Activated CD4-positive, alpha-beta memory T cell treated with anti-CD3 and anti-CD28 coated beads for 36 hours (primary cell): ENCODE measurements at regions of chr3 and their contacts with region 1.

Region 1: DNA sequence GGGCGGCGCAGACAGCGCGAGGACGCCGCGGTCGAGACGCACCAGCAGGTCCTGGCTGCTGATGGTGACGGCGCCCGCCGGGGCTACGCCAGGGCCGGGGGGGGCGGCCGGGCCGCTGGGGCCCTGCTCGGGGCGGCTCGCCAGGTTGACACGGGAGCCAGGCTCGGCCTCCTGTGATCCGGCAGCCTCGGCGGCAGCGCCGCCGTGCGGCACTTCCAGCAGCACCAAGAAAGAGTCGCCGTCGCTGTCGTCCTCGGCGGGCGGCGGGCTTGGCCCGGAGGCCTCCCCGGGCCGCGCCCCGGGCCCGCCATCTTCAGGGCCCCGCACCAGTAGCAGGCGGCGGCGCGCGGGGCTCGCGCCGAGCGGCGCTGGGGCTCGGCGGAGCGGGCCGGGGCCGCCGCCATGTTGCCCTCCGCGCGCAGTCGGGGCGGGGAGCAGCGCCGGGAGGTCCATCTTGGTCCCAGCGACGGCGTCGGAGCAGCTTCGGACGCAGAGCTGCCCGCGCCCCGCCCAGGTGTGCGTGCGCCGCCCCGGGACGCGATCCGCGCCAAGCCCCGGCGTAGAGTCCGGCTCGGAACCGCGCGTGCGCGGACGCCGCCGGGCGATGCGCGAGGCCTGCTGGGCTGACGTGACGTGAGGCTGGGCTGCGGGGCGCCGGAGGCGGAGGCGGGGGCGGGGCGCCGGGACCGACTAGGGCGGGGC is at the start of gene ZXDC:
- DNase-seq: peak; percentile 94
- H3K4me3 Mint-ChIP-seq: peak within 1 kb of the TSS; percentile 88
- H3K27ac Mint-ChIP-seq: peak within 1 kb of the TSS; percentile 79
- H3K4me1 Mint-ChIP-seq: peaks cover 39% of the 10 kb centered on the region
- H3K27me3 Mint-ChIP-seq: no peaks in the 10 kb centered on the region
- total RNA-seq, gene ZXDC: 18.2 to 19.1 TPM

Region 2: DNA sequence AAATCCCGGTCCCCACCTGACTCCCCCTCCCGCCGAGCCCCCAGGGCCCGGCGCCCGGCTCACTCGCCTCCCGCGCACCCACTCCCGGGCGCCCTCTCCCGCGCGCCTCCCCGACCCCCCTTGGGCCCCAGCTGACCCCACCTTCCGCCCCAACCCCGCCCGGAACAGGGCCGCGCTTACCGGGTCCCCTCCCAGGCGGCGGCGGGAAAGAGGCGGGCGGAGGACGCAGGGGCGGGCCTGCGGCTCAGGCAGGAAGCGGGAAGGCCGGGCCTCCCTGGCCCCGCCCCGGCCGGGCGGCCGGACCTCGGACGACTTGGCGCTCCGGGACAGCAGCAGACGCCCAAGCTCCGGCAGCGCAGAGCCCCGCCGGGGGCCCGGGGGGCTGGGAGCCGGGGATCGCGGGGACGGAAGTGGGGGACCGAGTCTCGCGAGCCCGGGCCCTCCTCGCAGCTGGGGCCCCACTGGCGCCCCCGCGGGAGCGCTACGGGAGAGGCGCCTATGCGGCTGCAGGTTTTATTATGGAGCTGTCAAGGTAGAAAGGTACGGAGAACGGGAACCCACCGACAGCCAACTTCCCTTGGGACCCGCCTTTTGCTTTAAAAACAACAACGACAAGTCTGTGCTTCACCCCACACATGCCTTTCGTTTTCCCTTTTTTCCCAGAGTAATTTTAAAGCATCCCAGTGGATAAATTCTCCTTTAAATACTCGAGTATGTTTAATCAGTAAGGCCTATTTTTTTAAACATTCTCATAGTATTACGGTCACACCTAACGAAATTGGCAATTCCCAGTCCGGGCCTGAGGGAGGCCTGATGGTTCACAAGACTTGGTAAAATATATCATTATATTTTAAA is 391.4 kb before region 1 on chr3 and contains the start of gene SLC41A3:
- CTCF ChIA-PET with region 1: no interaction called
- POLR2A ChIA-PET with region 1: no interaction called
- intact Hi-C with region 1: loop called (anchors 2 kb)
- DNase-seq: peak; percentile 90
- H3K4me3 Mint-ChIP-seq: peak within 1 kb of the TSS; percentile 85
- H3K27ac Mint-ChIP-seq: peak within 1 kb of the TSS; percentile 67
- H3K4me1 Mint-ChIP-seq: peaks cover 19% of the 10 kb centered on the region
- H3K27me3 Mint-ChIP-seq: no peaks in the 10 kb centered on the region
- total RNA-seq, gene SLC41A3: 26.3 to 27.3 TPM

Region 3: GRCh38 chr3:126357295-126358037 is 118.1 kb before region 1 on chr3 and contains the start of gene KLF15:
- CTCF ChIA-PET with region 1: interaction called, 3 read pairs
- POLR2A ChIA-PET with region 1: no interaction called
- intact Hi-C with region 1: loop called (anchors 1 kb)
- DNase-seq: peak; percentile 87
- H3K4me3 Mint-ChIP-seq: peak within 1 kb of the TSS; percentile 77
- H3K27ac Mint-ChIP-seq: no peak within 1 kb of the TSS
- H3K4me1 Mint-ChIP-seq: peaks cover 14% of the 10 kb centered on the region
- H3K27me3 Mint-ChIP-seq: peaks cover 48% of the 10 kb centered on the region
- total RNA-seq, gene KLF15: 0.40 to 0.46 TPM

Region 4: DNA sequence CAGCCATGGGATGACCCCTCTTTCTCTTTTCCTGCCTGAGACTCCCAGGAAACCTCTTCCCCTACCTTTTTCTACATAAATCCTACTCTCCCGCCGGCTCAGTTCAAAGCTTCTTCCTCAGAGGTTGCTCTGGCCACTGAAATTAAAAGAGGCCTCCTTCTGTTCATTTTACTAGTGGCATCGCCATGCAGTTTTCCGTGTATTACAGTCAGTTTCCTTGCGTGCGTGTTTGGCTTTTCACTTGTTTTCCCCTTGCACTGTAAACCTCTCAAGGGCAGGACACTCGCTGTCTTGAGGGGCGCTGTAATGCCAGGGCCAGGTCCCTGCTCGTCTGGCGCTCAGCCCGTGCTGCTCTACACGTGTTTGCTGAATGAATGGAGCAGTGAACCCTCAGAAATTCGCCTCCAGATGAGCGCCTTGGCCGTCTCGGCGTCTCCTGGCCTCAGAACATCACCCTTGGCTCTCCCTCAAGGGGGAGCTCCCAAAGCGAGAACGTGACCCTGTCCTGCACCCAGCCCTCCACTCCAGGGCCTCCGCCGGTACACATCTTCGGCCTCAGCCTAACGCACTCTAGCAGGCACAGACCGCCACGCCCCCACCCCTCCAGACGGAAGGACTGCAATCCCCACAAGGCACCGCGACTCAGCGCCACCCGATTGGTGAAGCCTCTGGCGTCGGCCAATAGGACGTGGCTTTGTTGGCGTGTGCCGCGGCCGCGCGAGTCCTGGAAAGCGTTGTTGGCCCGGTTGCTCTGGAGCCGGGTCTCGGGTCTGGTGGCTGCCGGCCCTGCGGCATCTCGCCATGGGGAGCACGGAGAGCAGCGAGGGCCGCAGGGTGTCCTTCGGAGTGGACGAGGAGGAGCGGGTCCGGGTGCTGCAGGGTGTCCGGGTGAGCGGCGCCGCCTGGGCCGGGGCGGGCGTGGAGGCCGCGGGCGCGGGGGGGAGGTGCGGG is 228.2 kb after region 1 on chr3 and contains the start of gene CHCHD6:
- CTCF ChIA-PET with region 1: no interaction called
- POLR2A ChIA-PET with region 1: no interaction called
- intact Hi-C with region 1: loop called (anchors 5 kb)
- DNase-seq: peak; percentile 96
- H3K4me3 Mint-ChIP-seq: peak within 1 kb of the TSS; percentile 97
- H3K27ac Mint-ChIP-seq: peak within 1 kb of the TSS; percentile 72
- H3K4me1 Mint-ChIP-seq: peaks cover 21% of the 10 kb centered on the region
- H3K27me3 Mint-ChIP-seq: peaks cover 22% of the 10 kb centered on the region
- total RNA-seq, gene CHCHD6: 12.7 to 13.1 TPM